Activated CD8-positive, alpha-beta T cell treated with anti-CD3 and anti-CD28 coated beads, Interleukin-2, amount 10 ng/mL, durations not matched to agents 7 days and 5 days (primary cell): ENCODE measurements at regions of chr11 and their contacts with region 1.

Region 1: DNA sequence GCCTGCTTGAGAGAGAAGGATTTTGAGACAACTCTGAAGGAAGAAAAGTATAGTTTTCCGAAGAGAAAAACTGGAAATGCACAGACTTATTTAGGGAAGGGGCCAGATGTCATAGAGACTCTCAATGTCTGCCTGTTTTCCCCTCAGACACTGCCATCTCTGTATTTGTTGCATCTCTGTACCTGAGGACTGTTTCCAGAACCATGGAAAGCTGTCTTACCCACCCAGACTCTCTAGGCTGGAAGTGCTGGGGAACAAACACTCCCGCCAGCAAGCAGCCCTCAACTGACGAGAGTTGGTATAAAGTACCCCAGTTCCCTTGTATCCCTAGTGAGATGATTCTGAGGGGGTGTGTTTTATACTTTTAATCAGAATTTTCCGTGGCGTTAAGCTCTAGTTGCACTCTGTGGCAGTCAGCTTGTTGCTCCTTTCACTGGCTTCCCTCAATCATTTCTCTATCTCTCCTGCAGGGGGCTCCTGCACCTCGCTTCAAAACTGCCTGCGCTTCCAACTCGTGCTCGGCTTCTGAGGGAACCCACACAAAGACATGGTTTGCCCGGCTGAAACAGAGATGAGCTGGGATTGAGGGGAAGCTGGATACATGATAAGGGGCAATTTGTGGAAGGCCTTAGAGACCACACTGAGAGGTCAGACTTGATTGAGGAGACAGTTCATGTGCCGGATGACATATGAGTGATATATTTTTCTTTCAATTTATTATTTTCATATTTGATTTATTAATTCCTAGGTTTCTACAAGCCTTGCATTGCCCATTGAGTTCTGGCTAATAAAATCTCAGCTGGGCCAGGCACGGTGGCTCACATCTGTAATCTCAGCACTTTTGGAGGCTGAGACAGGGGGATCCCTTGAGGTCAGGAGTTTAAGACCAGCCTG is 36.9 kb upstream of the CLPB start:
- DNase-seq: peak; percentile 69
- ATAC-seq: peak; percentile 98
- H3K4me3 Mint-ChIP-seq: no peak overlapping the region
- H3K27ac Mint-ChIP-seq: no peak overlapping the region
- H3K4me1 Mint-ChIP-seq: peaks cover 2% of the 10 kb centered on the region
- H3K27me3 Mint-ChIP-seq: peaks cover 48% of the 10 kb centered on the region

Region 2: DNA sequence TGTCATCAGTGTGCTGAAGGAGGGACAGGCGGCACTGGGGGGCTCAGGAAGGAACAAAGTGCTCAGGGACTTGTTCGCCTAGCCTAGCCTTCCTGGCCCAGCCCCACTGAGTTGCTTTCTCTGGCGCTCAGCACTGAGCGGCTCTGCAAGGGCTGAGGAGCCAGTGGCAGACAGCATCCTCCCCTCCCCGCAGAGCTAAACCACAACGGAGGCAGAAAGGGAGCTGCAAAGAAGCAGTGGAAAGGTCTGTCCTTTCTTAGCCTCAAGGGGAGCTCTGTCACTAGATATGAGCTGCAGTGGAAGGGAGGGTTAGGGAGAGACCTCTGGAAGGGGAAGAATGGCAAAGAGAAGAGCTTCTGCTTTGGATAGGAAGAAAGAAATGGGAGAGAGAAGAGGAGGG is 137.6 kb before region 1 on chr11:
- CTCF ChIA-PET with region 1: no interaction called
- POLR2A ChIA-PET with region 1: no interaction called
- DNase-seq: peak; percentile 91
- ATAC-seq: peak; percentile 97
- H3K4me3 Mint-ChIP-seq: peak overlapping the region; percentile 12
- H3K27ac Mint-ChIP-seq: peak overlapping the region; percentile 82
- H3K4me1 Mint-ChIP-seq: peaks cover 45% of the 10 kb centered on the region
- H3K27me3 Mint-ChIP-seq: no peaks in the 10 kb centered on the region

Region 3: GRCh38 chr11:72454791-72455190 is 16.5 kb before region 1 on chr11:
- CTCF ChIA-PET with region 1: interaction called, 34 read pairs
- POLR2A ChIA-PET with region 1: interaction called, 3 read pairs
- DNase-seq: no peak
- ATAC-seq: no peak
- H3K4me3 Mint-ChIP-seq: no peak overlapping the region
- H3K27ac Mint-ChIP-seq: no peak overlapping the region
- H3K4me1 Mint-ChIP-seq: no peaks in the 10 kb centered on the region
- H3K27me3 Mint-ChIP-seq: peaks cover 30% of the 10 kb centered on the region

Region 4: DNA sequence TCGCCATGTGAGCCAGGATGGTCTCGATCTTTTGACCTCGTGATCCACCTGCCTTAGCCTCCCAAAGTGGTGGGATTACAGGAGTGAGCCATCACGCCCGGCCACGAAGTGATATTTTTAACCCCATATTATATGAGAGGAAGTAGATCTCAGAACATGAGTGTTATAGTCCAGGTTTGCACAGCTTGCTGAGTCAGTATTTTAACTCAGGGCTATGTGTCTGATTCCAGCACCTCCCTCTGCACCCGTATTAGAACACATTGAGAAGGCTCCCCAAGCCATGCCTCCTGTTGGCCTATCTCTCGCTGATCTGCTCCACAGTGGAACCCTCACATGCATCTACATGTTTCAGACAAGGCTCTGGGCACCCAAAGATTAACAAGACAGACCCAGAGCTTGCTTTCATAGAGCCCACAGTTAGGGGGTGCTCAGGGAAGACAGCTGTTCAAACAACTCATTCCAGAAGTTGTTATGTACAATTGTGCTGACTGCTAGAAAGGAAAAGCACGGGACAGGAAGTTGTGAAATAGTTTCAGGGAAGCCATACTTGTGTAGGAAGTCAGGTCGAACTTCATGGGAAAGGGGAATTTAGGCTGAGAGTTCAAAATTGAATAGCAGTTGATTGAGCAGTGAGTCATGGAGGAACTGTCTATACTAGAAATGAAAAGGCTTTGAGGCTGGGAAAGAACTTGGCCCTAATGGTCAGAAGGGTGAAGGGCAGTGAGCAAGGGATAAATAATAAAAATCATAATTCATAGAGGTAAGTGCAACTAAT is 12.3 kb after region 1 on chr11:
- CTCF ChIA-PET with region 1: interaction called, 13 read pairs
- POLR2A ChIA-PET with region 1: no interaction called
- DNase-seq: peak; percentile 26
- ATAC-seq: peak; percentile 43
- H3K4me3 Mint-ChIP-seq: no peak overlapping the region
- H3K27ac Mint-ChIP-seq: peak overlapping the region; percentile 10
- H3K4me1 Mint-ChIP-seq: peaks cover 20% of the 10 kb centered on the region
- H3K27me3 Mint-ChIP-seq: peaks cover 11% of the 10 kb centered on the region

Region 5: DNA sequence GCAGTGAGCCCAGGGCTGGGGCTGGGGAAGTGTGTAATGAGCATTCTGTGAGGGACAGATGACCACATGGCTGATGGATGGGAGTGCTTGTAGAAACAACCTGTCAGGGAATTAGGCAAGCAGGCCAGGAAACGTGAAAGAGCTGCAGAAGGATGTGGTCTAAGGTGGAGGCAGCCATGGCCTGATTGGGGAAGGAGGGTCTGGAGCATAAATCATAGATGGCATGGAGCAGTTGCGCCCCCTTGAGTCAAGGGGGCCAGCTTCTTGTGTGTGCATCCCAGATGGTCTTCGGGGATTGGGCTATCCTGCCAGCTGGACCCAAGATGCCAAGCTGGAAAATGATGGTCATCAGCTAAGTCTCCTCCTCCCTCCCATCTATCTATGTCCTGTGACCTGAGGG is 82.5 kb after region 1 on chr11:
- CTCF ChIA-PET with region 1: interaction called, 53 read pairs
- POLR2A ChIA-PET with region 1: interaction called, 3 read pairs
- DNase-seq: peak; percentile 58
- ATAC-seq: peak; percentile 57
- H3K4me3 Mint-ChIP-seq: no peak overlapping the region
- H3K27ac Mint-ChIP-seq: no peak overlapping the region
- H3K4me1 Mint-ChIP-seq: peaks cover 10% of the 10 kb centered on the region
- H3K27me3 Mint-ChIP-seq: peaks cover 15% of the 10 kb centered on the region

Region 6: DNA sequence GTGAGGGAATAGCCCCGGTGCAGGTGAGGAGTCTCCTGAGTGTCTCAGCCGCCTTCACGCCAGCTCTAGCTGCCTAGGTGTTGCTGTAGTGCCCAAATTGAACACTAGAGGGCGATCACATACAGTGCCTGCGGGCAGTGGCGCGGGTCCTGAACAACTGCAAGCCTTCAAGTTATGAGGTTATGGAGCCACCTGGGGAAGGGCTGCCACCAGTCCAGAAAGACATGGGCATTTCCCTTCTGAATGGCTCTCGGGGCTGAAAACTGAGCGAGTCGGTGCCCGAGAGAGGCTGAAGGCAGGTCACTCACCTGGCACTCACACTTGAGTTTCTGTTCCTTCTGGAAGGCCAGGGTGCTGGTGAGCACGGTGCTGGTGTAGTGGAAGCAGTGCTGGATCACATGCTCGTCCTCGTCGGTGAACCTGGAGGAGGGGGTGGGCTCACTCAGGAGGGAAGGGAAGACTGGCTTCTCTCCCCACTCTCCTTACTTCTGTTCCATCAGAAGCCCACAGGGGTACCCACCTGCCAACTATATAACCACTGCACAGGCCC is 114.6 kb after region 1 on chr11:
- CTCF ChIA-PET with region 1: interaction called, 11 read pairs
- POLR2A ChIA-PET with region 1: no interaction called
- DNase-seq: peak; percentile 77
- ATAC-seq: peak; percentile 73
- H3K4me3 Mint-ChIP-seq: no peak overlapping the region
- H3K27ac Mint-ChIP-seq: no peak overlapping the region
- H3K4me1 Mint-ChIP-seq: peaks cover 30% of the 10 kb centered on the region
- H3K27me3 Mint-ChIP-seq: peaks cover 49% of the 10 kb centered on the region

Region 7: GRCh38 chr11:72683782-72684200 is 212.5 kb after region 1 on chr11:
- CTCF ChIA-PET with region 1: interaction called, 27 read pairs
- POLR2A ChIA-PET with region 1: no interaction called
- DNase-seq: peak; percentile 78
- ATAC-seq: peak; percentile 64
- H3K4me3 Mint-ChIP-seq: no peak overlapping the region
- H3K27ac Mint-ChIP-seq: no peak overlapping the region
- H3K4me1 Mint-ChIP-seq: peaks cover 44% of the 10 kb centered on the region
- H3K27me3 Mint-ChIP-seq: peaks cover 8% of the 10 kb centered on the region

Region 8: GRCh38 chr11:72736452-72737069 is 265.3 kb after region 1 on chr11:
- CTCF ChIA-PET with region 1: no interaction called
- POLR2A ChIA-PET with region 1: no interaction called
- DNase-seq: peak; percentile 84
- ATAC-seq: peak; percentile 85
- H3K4me3 Mint-ChIP-seq: peak overlapping the region; percentile 54
- H3K27ac Mint-ChIP-seq: peak overlapping the region; percentile 99
- H3K4me1 Mint-ChIP-seq: peaks cover 58% of the 10 kb centered on the region
- H3K27me3 Mint-ChIP-seq: no peaks in the 10 kb centered on the region